ENCODE measurements at regions of chr2 and their contacts with region 1.

Region 1: DNA sequence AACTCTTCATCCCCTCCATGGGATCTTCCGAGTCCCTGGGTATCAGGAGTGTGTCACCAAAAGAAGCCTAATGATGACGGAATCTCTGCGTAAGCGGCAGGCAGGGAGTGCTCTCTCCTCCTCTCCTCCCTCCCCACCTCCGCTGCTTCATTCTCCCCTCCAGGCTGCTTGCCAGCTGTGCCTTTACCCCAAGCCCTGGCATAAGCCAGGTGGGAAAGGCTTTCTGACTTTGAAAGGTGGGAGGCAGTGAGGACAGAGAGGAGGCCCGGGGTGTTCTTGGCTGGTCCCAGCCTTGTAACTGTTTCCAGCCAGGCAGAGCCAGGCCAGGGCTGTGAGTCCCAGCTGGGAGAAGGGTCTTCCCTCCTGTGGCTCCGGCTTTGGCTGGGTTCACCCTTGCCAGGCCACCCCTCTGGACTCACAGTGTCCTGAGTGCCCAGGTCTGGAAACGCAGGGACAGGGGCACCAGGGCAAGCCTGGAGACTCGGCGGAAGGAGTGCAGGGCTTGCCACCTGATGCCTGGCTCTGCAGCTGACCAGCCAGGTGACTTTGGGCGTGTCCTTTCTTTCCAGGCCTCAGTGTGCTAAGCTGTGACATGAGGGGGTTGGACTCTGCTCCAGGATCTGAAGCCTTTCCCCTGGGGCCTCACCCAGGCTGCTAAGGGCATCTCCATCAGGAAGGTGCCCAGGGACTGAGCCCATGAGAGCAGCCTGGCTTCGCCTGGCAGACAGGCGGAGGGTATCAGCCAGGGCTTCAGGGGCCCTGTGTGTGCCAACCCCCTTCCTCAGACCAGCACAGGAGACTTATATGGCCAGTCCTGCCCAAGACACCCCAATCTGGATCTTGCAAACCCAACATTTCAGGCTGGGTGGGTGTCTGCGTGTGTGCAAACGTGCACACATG is 32.7 kb upstream of the HPCAL1 start:
- DNase-seq: no peak
- H3K4me3 Mint-ChIP-seq: no peak overlapping the region
- H3K27ac Mint-ChIP-seq: no peak overlapping the region
- H3K4me1 Mint-ChIP-seq: peaks cover 6% of the 10 kb centered on the region
- H3K27me3 Mint-ChIP-seq: peaks cover 6% of the 10 kb centered on the region

Region 2: GRCh38 chr2:10369269-10370255 is 99.6 kb after region 1 on chr2:
- intact Hi-C with region 1: no loop called
- DNase-seq: no peak
- H3K4me3 Mint-ChIP-seq: no peak overlapping the region
- H3K27ac Mint-ChIP-seq: no peak overlapping the region
- H3K4me1 Mint-ChIP-seq: peaks cover 9% of the 10 kb centered on the region
- H3K27me3 Mint-ChIP-seq: no peaks in the 10 kb centered on the region

Region 3: DNA sequence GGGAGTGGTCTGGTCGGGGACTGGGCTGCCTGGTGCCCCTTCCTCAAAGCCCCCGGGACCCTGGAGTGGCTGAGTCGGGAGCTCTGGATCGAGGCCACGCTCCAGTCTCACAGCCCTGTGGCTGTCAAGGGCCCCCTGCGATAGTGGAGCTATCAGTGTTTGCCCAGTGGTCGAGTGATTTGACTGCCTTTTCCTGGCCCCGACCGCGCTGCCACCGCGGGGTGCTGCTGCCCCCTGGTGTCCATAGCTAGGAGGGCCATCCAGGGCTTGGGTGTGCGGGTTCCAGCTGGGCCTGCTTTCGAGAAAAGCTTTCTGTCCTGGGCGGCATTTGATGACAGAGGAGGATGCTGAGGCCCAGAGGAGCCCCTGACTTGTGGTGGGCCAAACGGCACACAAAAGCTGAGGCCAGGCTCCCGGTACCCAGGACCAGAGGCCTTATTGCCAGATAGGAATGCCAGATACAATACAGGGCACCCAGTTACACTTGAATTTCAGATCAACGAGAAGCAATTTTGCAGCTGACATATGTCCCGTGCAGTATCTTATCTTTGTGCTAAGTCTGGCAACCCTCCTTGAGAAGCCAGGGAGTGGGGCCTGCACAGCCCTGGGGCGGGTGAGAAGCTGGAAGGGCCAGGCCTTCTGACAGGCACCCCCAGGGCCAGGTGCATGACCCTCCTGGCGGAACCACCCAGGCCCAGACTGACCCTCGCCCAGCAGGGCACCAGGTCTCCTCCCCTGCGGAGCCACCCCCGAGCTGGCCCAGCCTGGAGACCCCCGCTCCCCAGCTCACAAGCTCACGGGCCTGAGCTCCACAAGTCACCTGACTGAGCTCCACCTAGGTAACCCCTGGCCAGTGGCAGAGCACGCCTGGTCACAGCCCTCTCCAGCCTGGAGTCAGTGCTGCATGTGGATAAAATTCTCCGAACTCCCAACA is 165.2 kb after region 1 on chr2:
- intact Hi-C with region 1: loop called (anchors 1 kb)
- DNase-seq: peak; percentile 94
- H3K4me3 Mint-ChIP-seq: peak overlapping the region; percentile 23
- H3K27ac Mint-ChIP-seq: no peak overlapping the region
- H3K4me1 Mint-ChIP-seq: peaks cover 12% of the 10 kb centered on the region
- H3K27me3 Mint-ChIP-seq: peaks cover 4% of the 10 kb centered on the region

Measured in activated CD4-positive, alpha-beta T cell treated with anti-CD3 and anti-CD28 coated beads, Interleukin-2, amount 10 ng/mL, durations not matched to agents 24 days and 14 days (primary cell).